ENCODE measurements at regions of chr3 and their contacts with region 1.

Region 1: GRCh38 chr3:151976211-151977050 is 103.0 kb downstream of the SUCNR1 start:
- DNase-seq: peak; percentile 99
- H3K4me3 ChIP-seq: peak overlapping the region in 1 of 3 experiments; percentile 3
- H3K27ac ChIP-seq: peak overlapping the region; percentile 90
- H3K4me1 ChIP-seq: peaks cover 32% of the 10 kb centered on the region
- H3K27me3 ChIP-seq: no peaks in the 10 kb centered on the region
- CTCF ChIP-seq: no peak
- POLR2A ChIP-seq: no peak

Region 2: DNA sequence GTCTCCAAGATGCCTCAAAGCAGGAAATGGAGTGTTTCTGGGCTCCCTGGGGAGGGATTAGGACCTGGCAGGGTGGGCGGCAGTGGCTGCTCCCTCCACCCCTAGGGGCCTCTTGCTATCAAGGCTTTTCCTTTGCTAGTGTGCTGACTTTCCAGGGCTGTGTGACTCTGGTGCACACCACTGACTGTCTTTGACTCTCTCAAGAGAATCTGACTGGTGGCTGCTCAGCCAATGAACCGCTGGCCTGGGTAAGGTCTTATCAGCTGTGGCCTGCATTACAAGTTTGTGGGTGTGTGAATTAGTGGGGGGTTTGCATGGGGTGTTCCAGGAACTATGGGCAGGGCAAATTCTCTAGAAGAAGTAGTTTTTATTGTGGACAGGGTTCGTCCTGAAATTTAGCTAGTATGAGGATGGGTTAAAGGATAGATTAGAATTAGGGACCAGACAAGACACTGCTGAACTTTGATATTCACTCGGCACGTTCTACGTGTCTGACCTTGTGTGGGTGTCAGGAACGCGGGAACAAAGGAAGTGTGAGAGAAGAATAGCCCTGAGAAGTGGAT is 1243.0 kb before region 1 on chr3:
- CTCF ChIA-PET with region 1: no interaction called
- POLR2A ChIA-PET with region 1: no interaction called
- dilution Hi-C with region 1: no loop called
- intact Hi-C with region 1: no loop called
- DNase-seq: no peak
- H3K4me3 ChIP-seq: no peak overlapping the region
- H3K27ac ChIP-seq: no peak overlapping the region
- H3K4me1 ChIP-seq: no peaks in the 10 kb centered on the region
- H3K27me3 ChIP-seq: no peaks in the 10 kb centered on the region
- CTCF ChIP-seq: no peak
- POLR2A ChIP-seq: no peak

Region 3: GRCh38 chr3:151864423-151865101 is 111.9 kb before region 1 on chr3:
- CTCF ChIA-PET with region 1: no interaction called
- POLR2A ChIA-PET with region 1: no interaction called
- dilution Hi-C with region 1: no loop called
- intact Hi-C with region 1: loop called (anchors 1 kb)
- DNase-seq: peak; percentile 84
- H3K4me3 ChIP-seq: peak overlapping the region in 1 of 3 experiments; percentile 17
- H3K27ac ChIP-seq: peak overlapping the region; percentile 66
- H3K4me1 ChIP-seq: peaks cover 31% of the 10 kb centered on the region
- H3K27me3 ChIP-seq: no peaks in the 10 kb centered on the region
- CTCF ChIP-seq: no peak
- POLR2A ChIP-seq: no peak

Region 4: GRCh38 chr3:151925876-151926275 is 50.6 kb before region 1 on chr3:
- CTCF ChIA-PET with region 1: no interaction called
- POLR2A ChIA-PET with region 1: no interaction called
- dilution Hi-C with region 1: no loop called
- intact Hi-C with region 1: loop called (anchors 1 kb)
- DNase-seq: peak; percentile 67
- H3K4me3 ChIP-seq: no peak overlapping the region
- H3K27ac ChIP-seq: peak overlapping the region; percentile 29
- H3K4me1 ChIP-seq: peaks cover 32% of the 10 kb centered on the region
- H3K27me3 ChIP-seq: no peaks in the 10 kb centered on the region
- CTCF ChIP-seq: no peak
- POLR2A ChIP-seq: no peak

Region 5: GRCh38 chr3:151992326-151993041 is 16.1 kb after region 1 on chr3:
- CTCF ChIA-PET with region 1: no interaction called
- POLR2A ChIA-PET with region 1: no interaction called
- dilution Hi-C with region 1: no loop called
- intact Hi-C with region 1: no loop called
- DNase-seq: no peak
- H3K4me3 ChIP-seq: no peak overlapping the region
- H3K27ac ChIP-seq: no peak overlapping the region
- H3K4me1 ChIP-seq: no peaks in the 10 kb centered on the region
- H3K27me3 ChIP-seq: no peaks in the 10 kb centered on the region
- CTCF ChIP-seq: no peak
- POLR2A ChIP-seq: no peak

Region 6: DNA sequence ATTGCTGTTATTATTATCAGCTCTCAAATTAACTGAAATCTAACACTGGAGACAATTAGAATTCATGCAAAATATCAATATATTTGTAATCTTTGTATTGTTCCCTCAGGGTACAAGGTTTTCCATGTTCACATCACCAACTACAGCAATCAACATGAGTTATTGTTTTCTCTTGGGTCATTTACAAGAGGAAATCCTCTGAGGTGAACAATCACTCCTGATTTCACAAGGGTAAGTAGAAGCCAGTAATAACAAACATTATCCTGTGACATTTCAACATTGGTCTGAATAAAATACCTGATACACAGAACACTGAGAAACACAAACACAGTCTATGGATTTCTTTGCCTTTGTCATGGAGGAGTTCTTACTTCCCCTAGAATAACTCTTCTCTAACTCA is 71.0 kb after region 1 on chr3:
- CTCF ChIA-PET with region 1: no interaction called
- POLR2A ChIA-PET with region 1: no interaction called
- dilution Hi-C with region 1: no loop called
- intact Hi-C with region 1: loop called (anchors 1 kb)
- DNase-seq: peak; percentile 92
- H3K4me3 ChIP-seq: no peak overlapping the region
- H3K27ac ChIP-seq: peak overlapping the region; percentile 35
- H3K4me1 ChIP-seq: peaks cover 20% of the 10 kb centered on the region
- H3K27me3 ChIP-seq: no peaks in the 10 kb centered on the region
- CTCF ChIP-seq: no peak
- POLR2A ChIP-seq: no peak

Region 7: DNA sequence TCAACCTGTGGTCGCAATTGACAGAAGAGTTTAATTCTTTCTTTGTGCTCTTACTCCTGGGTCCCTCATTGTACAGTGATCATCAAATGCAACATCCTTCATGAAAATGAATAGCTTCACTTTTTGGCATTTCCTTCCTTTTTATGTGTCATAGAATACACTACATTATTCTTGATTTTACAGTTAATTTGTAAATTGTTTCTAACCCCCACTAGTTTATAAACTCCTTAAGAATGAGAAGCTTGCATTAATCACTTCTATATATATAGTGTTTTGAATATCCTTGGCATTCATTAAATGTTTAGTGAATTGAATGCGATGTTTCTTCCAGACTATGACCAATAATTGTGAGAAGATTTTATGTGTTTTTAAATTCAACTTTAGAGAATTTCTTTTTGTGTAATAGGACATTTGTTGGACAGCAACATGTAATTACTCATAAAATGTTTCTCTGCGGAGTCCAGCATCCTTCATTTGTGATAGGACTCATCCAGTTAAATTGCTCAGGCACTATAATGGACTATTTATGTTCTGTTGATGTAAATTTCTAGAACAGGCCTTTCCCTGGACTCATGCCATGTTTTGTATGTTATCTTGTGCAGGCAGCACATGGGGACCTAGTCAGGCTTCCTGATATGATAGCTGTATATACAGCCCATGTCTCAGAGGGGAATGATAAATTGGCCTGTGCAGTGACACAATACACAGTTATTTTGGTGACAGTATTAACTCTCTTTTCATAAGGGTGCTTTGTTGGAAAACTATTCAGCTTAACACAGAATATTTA is 343.6 kb after region 1 on chr3:
- CTCF ChIA-PET with region 1: no interaction called
- POLR2A ChIA-PET with region 1: no interaction called
- dilution Hi-C with region 1: no loop called
- intact Hi-C with region 1: loop called (anchors 5 kb)
- DNase-seq: peak; percentile 99
- H3K4me3 ChIP-seq: no peak overlapping the region
- H3K27ac ChIP-seq: peak overlapping the region; percentile 83
- H3K4me1 ChIP-seq: peaks cover 96% of the 10 kb centered on the region
- H3K27me3 ChIP-seq: no peaks in the 10 kb centered on the region
- CTCF ChIP-seq: no peak
- POLR2A ChIP-seq: peak; percentile 84

Region 8: DNA sequence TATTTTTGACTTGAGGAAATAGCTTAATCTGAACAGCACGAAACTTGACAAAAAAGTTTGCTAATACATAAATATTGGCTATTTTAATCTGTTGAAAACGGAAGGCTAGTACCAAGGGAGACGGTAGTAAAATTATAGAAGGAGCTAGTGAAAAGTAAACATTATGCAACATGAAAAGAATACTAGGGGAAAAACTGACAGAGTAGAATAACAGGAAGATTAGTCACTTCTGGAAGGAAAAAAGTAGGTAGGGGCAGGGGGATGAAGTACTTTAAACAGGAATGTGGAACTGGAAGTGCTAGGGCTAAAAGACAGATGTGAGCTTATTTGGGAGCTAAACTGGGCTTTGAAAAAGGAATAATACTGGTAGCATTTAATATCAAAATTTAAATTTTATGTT is 352.4 kb after region 1 on chr3:
- CTCF ChIA-PET with region 1: no interaction called
- POLR2A ChIA-PET with region 1: no interaction called
- dilution Hi-C with region 1: no loop called
- intact Hi-C with region 1: loop called (anchors 2 kb)
- DNase-seq: peak; percentile 95
- H3K4me3 ChIP-seq: peak overlapping the region in 1 of 3 experiments; percentile 43
- H3K27ac ChIP-seq: peak overlapping the region; percentile 93
- H3K4me1 ChIP-seq: peaks cover 83% of the 10 kb centered on the region
- H3K27me3 ChIP-seq: no peaks in the 10 kb centered on the region
- CTCF ChIP-seq: no peak
- POLR2A ChIP-seq: peak; percentile 49

Measured in endothelial cell of umbilical vein (primary cell).